Mammary epithelial cell (primary cell): ENCODE measurements at regions of chr19 and their contacts with region 1.

Region 1: DNA sequence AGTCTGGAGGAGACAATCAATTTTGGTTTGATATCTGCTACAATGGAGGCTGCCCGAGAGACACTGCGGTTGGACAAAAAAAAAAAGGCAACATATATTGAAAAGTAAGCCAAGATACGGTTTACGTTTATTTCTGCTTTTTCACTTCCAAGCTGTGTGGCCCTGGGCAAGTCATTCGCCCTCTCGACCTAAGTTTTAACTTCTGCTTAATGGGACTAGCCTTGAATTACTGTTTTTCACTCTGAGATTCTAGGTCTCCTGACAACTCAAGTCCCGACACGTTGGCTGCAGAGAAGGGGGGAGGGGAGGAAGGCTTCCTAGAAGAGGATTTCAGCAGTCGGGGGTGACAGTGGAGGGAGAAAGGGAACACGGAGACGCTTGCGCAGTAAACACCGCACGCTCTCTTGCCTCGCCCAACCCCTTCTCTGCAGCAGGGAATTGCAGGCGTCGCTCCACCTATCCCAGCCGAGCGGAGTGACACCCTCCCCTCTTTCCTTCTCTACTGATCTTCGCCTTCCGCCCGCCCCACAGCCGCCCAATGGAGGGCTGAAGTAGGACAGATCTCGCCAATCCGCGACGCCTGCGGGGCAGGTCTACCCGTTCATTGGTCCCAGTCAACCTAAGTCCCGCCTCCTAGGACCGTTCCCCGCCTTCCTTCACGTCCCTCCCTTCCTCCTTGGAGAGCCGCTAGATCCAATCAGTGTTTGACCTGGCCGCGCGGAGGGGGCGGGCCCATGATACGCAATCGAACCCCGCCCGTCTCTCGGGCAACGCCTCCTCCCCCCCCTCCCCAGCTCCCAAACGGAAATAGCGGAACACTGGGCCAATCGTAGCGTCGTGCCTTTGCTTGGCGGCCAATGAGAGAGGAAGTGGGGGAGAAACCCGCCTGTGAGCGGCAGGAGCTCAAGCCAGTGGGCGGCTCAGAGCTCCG is 529 bp upstream of the AP2A1 start:
- DNase-seq: peak; percentile 100
- H3K4me3 ChIP-seq: peak overlapping the region; percentile 28 to 38 (median 35)
- H3K27ac ChIP-seq: peak overlapping the region; percentile 93
- H3K4me1 ChIP-seq: peaks cover 20% of the 10 kb centered on the region
- H3K27me3 ChIP-seq: no peaks in the 10 kb centered on the region
- CTCF ChIP-seq: no peak

Region 2: GRCh38 chr19:49443366-49444099 is 322.7 kb before region 1 on chr19:
- CTCF ChIA-PET with region 1: no interaction called
- dilution Hi-C with region 1: no loop called
- in situ Hi-C with region 1: no loop called
- intact Hi-C with region 1: no loop called
- DNase-seq: peak; percentile 89
- H3K4me3 ChIP-seq: peak overlapping the region; percentile 66 to 88 (median 82)
- H3K27ac ChIP-seq: peak overlapping the region; percentile 54
- H3K4me1 ChIP-seq: no peaks in the 10 kb centered on the region
- H3K27me3 ChIP-seq: peaks cover 11% of the 10 kb centered on the region
- CTCF ChIP-seq: peak; percentile 66 to 91

Region 3: DNA sequence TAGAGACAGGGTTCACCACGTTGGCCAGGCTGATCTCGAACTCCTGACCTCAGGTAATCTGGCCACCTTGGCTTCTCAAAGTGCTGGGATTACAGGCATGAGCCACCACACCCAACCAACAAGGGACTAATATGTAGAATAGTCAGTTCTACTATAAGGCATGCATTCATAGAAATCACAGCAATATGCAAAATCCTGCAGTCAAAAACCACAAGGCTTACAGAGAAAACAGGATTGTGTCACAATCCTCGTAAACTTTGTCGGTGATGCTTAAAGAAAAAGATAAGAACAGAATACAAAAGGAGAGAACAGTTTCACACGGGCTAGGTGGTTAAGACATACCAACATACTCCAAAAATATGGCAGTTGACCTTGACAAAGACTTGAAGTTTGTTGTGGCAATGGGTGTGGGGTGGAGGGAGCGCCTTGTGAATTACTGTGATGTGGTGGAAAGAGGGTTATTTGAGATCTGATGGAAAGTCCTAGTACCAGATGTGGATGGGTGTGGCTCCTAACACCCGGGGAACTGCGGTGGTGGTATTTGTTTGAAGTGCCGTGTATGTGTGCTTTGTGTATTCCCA is 198.3 kb before region 1 on chr19:
- CTCF ChIA-PET with region 1: no interaction called
- dilution Hi-C with region 1: no loop called
- in situ Hi-C with region 1: no loop called
- intact Hi-C with region 1: no loop called
- DNase-seq: no peak
- H3K4me3 ChIP-seq: no peak overlapping the region
- H3K27ac ChIP-seq: no peak overlapping the region
- H3K4me1 ChIP-seq: peaks cover 3% of the 10 kb centered on the region
- H3K27me3 ChIP-seq: no peaks in the 10 kb centered on the region
- CTCF ChIP-seq: no peak

Region 4: DNA sequence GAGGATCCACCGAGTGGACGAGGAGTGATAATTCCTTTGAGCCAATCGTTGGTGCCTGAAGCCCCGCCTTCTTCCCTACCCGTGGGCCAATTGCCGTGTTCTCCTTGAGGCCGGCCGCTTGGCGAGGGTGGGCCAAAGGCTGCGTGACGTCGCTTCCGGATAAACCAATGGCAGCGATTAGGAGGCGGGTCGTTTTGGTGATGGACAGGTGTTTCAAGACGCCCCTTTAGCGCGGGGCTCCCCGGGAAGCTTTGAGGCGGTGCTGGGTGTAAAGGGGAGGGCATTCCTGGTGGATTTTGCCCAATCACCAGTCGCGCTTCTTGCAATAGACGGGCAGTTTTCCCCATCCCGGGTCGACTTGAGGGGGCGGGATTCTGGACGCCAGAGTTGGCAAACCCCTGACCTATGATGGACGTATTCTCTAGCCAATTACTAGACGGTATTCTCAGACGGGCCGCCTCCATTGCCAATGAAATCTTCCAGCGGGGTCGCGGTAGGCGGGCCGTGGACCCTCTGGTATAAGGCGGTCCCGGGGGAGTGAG is 89.5 kb before region 1 on chr19:
- CTCF ChIA-PET with region 1: no interaction called
- dilution Hi-C with region 1: no loop called
- in situ Hi-C with region 1: no loop called
- intact Hi-C with region 1: no loop called
- DNase-seq: peak; percentile 100
- H3K4me3 ChIP-seq: peak overlapping the region; percentile 84 to 100 (median 91)
- H3K27ac ChIP-seq: peak overlapping the region; percentile 92
- H3K4me1 ChIP-seq: peaks cover 25% of the 10 kb centered on the region
- H3K27me3 ChIP-seq: no peaks in the 10 kb centered on the region
- CTCF ChIP-seq: no peak

Region 5: DNA sequence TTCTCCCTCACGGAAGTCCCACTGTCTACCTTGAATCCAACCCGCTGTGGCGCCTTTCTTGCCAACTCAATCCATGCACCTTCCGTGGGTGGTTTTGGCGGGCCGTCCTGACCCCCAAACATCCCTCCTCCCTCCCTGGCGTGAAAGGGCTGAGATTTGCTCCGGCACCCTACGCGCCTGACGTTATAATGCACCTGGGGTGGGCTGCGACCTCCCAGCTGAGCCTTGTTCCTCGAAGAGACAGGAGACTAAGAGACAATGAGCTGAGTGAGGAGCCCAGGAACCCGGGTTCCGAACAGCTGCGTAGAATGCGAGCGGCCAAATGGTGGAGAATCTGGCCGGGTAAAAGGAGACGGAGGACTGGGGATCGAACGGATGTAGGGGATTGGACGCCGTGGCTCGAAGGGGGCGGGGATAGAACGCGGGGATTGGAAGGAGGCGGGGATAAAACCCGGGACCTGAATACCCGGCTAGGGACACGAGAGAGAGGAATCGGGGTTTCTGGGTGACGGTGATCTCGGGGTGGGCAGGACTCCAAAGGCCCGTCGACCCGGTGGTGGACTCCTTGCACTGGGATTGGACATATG is 75.5 kb before region 1 on chr19 and contains the start of gene CPT1C:
- CTCF ChIA-PET with region 1: no interaction called
- dilution Hi-C with region 1: no loop called
- in situ Hi-C with region 1: no loop called
- intact Hi-C with region 1: loop called (anchors 5 kb)
- DNase-seq: no peak
- H3K4me3 ChIP-seq: peak within 1 kb of the TSS in 2 of 3 experiments; percentile 5 to 13
- H3K27ac ChIP-seq: no peak within 1 kb of the TSS
- H3K4me1 ChIP-seq: peaks cover 15% of the 10 kb centered on the region
- H3K27me3 ChIP-seq: peaks cover 5% of the 10 kb centered on the region
- CTCF ChIP-seq: no peak
- total RNA-seq, gene CPT1C: 0.78 to 0.83 TPM

Region 6: DNA sequence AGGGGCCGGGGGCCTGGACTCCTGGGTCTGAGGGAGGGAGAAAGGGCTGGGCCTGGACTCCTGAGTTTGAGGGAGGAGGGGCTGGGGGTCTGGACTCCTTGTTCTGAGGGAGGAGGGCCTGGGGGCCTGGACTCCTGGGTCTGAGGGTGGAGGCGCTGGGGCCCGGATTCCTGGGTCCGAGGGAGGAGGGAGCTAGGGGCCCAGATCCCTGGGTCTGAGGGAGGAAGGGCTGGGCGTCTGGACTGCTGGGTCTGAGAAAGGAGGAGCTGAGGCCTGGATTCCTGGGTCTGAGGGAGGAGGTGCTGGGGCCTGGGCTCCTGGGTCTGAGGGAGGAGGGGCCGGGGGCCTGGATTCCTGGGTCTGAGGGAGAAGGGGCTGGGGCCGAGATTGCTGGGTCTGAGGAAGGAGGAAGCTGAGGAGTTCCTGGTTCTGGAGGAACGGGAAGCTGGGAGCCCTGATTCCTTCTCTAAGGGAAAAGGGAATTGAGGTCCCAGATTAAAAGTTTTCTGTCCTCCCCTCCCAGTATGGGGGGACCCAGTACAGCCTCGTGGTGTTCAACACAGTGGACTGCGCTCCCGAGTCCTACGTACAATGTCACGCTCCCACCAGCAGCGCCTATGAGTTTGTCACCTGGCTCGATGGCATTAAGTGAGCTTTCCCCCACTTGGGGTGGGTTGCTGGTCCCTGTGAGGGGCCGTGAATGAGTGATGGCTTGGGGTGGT is 52.5 kb after region 1 on chr19:
- CTCF ChIA-PET with region 1: no interaction called
- dilution Hi-C with region 1: no loop called
- in situ Hi-C with region 1: no loop called
- intact Hi-C with region 1: no loop called
- DNase-seq: no peak
- H3K4me3 ChIP-seq: peak overlapping the region; percentile 68 to 94 (median 93)
- H3K27ac ChIP-seq: peak overlapping the region; percentile 99
- H3K4me1 ChIP-seq: peaks cover 6% of the 10 kb centered on the region
- H3K27me3 ChIP-seq: no peaks in the 10 kb centered on the region
- CTCF ChIP-seq: no peak

Region 7: GRCh38 chr19:49850473-49851342 is 84.4 kb after region 1 on chr19 and contains the start of gene PTOV1:
- CTCF ChIA-PET with region 1: no interaction called
- dilution Hi-C with region 1: no loop called
- in situ Hi-C with region 1: no loop called
- intact Hi-C with region 1: loop called (anchors 2 kb)
- DNase-seq: peak; percentile 81
- H3K4me3 ChIP-seq: peak within 1 kb of the TSS; percentile 76 to 95 (median 95)
- H3K27ac ChIP-seq: peak within 1 kb of the TSS; percentile 79
- H3K4me1 ChIP-seq: peaks cover 42% of the 10 kb centered on the region
- H3K27me3 ChIP-seq: no peaks in the 10 kb centered on the region
- CTCF ChIP-seq: no peak
- total RNA-seq, gene PTOV1: 28.8 to 85.6 TPM

Region 8: GRCh38 chr19:49869441-49870176 is 103.3 kb after region 1 on chr19:
- CTCF ChIA-PET with region 1: no interaction called
- dilution Hi-C with region 1: no loop called
- in situ Hi-C with region 1: no loop called
- intact Hi-C with region 1: loop called (anchors 5 kb)
- DNase-seq: peak; percentile 100
- H3K4me3 ChIP-seq: peak overlapping the region; percentile 28 to 55 (median 48)
- H3K27ac ChIP-seq: peak overlapping the region; percentile 35
- H3K4me1 ChIP-seq: peaks cover 30% of the 10 kb centered on the region
- H3K27me3 ChIP-seq: no peaks in the 10 kb centered on the region
- CTCF ChIP-seq: no peak

Region 9: DNA sequence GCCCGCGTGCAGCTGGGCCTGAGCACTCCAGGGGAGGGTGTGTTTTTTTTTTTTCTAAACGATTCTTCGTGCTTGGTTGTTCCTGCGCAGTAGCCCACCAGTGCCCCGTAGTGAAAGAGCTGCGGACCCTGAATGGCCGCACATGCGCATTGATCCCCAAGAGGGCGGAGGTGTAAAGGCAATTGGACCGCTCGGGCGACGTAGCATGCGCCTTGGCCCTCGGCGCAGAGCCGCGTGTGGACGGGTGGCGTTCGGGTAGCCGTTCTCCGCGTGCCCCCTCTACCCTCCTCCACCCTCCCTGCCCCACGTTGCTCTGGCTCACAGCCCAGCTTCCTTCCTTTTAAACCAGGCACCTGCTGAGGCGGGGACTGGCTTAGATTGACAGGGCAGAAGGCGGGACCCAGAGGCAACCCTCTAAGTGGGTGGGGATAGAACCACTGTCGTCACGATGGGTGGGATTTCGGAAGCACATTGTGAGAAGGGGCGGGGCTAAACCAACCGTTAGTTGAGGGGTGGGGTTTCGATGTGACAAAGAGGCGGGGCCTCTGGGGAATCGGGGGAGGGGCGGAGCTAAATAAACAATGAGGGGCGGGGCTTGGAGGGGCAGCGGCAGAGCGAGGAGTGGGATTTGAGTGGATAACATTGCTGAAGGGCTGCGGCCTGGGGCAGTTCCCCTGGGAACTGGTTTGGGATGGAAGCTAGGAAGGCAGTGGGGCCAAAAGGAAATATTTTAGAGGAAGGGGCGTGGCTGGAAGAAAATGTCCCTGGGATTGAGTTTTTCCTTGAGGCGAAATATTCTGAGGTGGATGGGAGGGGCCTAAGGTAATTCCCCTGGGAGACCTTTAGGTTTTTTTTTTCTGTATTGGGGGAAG is 163.6 kb after region 1 on chr19:
- CTCF ChIA-PET with region 1: no interaction called
- dilution Hi-C with region 1: no loop called
- in situ Hi-C with region 1: no loop called
- intact Hi-C with region 1: loop called (anchors 5 kb)
- DNase-seq: peak; percentile 88
- H3K4me3 ChIP-seq: peak overlapping the region; percentile 88 to 99 (median 97)
- H3K27ac ChIP-seq: peak overlapping the region; percentile 86
- H3K4me1 ChIP-seq: peaks cover 8% of the 10 kb centered on the region
- H3K27me3 ChIP-seq: no peaks in the 10 kb centered on the region
- CTCF ChIP-seq: peak in 1 of 2 donors; percentile 3